Activated CD4-positive, alpha-beta memory T cell treated with anti-CD3 and anti-CD28 coated beads, Interleukin-2, amount 10 ng/mL, durations not matched to agents 7 days and 5 days (primary cell): ENCODE measurements at regions of chr6 and their contacts with region 1.

Region 1: GRCh38 chr6:32838114-32838958 is at the start of gene TAP2:
- DNase-seq: peak; percentile 98
- H3K4me3 Mint-ChIP-seq: peak within 1 kb of the TSS; percentile 77
- H3K27ac Mint-ChIP-seq: peak within 1 kb of the TSS; percentile 99
- H3K4me1 Mint-ChIP-seq: peaks cover 80% of the 10 kb centered on the region
- H3K27me3 Mint-ChIP-seq: no peaks in the 10 kb centered on the region
- total RNA-seq, gene TAP2: 203 to 211 TPM

Region 2: GRCh38 chr6:32853541-32854375 is 15.4 kb after region 1 on chr6 and contains the starts of genes PSMB9 and TAP1:
- CTCF ChIA-PET with region 1: interaction called, 337 read pairs
- POLR2A ChIA-PET with region 1: interaction called, 1,055 read pairs
- DNase-seq: peak; percentile 95
- H3K4me3 Mint-ChIP-seq: peak within 1 kb of the TSS; percentile 100
- H3K27ac Mint-ChIP-seq: peak within 1 kb of the TSS; percentile 99
- H3K4me1 Mint-ChIP-seq: peaks cover 59% of the 10 kb centered on the region
- H3K27me3 Mint-ChIP-seq: no peaks in the 10 kb centered on the region
- total RNA-seq, gene PSMB9: 368 to 372 TPM
- total RNA-seq, gene TAP1: 410 to 412 TPM

Region 3: DNA sequence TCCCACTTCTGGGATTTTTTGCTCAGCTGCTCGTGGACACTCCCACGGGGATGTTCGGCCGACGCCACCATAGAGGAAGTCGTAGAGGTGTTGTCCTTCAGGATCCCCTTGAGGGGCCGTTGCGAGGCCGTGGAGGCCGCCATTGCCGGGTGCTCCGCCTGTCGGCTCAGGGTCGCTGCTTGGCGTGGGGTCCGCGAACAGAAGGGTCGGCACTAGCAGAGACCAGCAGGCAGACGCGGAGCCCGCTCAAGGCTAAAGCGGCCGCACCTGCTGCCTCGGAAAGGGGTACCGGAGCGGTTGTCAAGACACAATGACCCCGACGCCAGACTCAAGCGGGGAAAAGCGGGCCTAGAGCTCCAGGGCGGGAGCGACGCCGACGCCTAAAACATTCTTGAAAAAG is 41.4 kb after region 1 on chr6:
- CTCF ChIA-PET with region 1: interaction called, 11 read pairs
- POLR2A ChIA-PET with region 1: interaction called, 4 read pairs
- DNase-seq: no peak
- H3K4me3 Mint-ChIP-seq: no peak overlapping the region
- H3K27ac Mint-ChIP-seq: no peak overlapping the region
- H3K4me1 Mint-ChIP-seq: peaks cover 2% of the 10 kb centered on the region
- H3K27me3 Mint-ChIP-seq: no peaks in the 10 kb centered on the region

Region 4: GRCh38 chr6:32940656-32941213 is 102.4 kb after region 1 on chr6 and contains the start of gene HLA-DMB:
- CTCF ChIA-PET with region 1: interaction called, 11 read pairs
- POLR2A ChIA-PET with region 1: interaction called, 16 read pairs
- DNase-seq: peak; percentile 60
- H3K4me3 Mint-ChIP-seq: peak within 1 kb of the TSS; percentile 82
- H3K27ac Mint-ChIP-seq: peak within 1 kb of the TSS; percentile 94
- H3K4me1 Mint-ChIP-seq: peaks cover 59% of the 10 kb centered on the region
- H3K27me3 Mint-ChIP-seq: no peaks in the 10 kb centered on the region
- total RNA-seq, gene HLA-DMB: 19.1 to 20.0 TPM

Region 5: DNA sequence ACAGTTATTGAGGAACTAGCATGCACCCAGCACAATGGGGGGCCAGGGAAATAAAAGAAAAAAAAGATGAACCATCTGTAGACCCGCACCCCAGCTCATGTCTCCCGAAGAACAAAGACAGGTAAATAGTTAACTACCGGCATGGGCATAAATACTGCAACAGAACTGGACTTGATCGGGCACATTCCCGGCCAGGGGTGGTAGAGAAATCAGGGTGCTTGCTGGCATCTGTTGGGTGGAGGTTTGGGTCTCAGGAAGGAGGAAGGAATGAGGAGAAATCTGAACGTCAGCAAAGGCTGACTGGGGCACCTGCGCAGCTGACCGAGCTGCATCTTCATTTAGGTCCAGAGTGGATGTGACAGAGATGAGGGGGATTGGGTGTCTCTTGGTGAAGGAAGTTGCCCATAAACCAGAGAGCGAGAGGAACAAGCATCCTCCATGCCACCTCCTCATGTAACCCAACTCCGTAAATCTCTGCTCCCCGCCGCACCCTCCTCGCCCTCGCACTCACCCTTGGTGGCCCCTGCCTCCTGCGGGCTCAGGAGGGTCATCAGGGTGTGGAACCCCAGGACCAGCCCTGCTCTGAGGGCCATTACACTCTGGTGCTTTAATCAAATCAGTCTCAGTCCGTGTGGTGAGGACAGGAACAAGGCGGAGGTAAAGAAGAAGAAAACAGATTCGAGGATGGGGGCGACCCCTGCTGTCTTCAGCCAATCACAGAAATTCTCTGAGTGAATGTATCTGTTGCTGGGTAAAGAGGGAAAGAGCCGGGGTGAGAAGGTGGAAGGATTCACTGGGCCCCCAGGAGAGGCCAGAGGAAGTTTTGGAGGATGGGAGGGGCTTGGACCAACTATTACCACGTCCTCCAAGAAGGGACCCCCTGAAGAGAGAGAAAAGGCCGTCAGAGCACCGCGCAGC is 170.9 kb after region 1 on chr6 and contains the start of gene HLA-DOA:
- CTCF ChIA-PET with region 1: no interaction called
- POLR2A ChIA-PET with region 1: no interaction called
- DNase-seq: peak; percentile 44
- H3K4me3 Mint-ChIP-seq: peak within 1 kb of the TSS; percentile 66
- H3K27ac Mint-ChIP-seq: no peak within 1 kb of the TSS
- H3K4me1 Mint-ChIP-seq: peaks cover 15% of the 10 kb centered on the region
- H3K27me3 Mint-ChIP-seq: peaks cover 42% of the 10 kb centered on the region
- total RNA-seq, gene HLA-DOA: 3.4 to 4.1 TPM

Region 6: GRCh38 chr6:33057222-33058150 is 219.2 kb after region 1 on chr6:
- CTCF ChIA-PET with region 1: no interaction called
- POLR2A ChIA-PET with region 1: no interaction called
- DNase-seq: no peak
- H3K4me3 Mint-ChIP-seq: no peak overlapping the region
- H3K27ac Mint-ChIP-seq: no peak overlapping the region
- H3K4me1 Mint-ChIP-seq: no peaks in the 10 kb centered on the region
- H3K27me3 Mint-ChIP-seq: peaks cover 32% of the 10 kb centered on the region